AG04449 (cell line): ENCODE measurements at regions of chr5 and their contacts with region 1.

Region 1: DNA sequence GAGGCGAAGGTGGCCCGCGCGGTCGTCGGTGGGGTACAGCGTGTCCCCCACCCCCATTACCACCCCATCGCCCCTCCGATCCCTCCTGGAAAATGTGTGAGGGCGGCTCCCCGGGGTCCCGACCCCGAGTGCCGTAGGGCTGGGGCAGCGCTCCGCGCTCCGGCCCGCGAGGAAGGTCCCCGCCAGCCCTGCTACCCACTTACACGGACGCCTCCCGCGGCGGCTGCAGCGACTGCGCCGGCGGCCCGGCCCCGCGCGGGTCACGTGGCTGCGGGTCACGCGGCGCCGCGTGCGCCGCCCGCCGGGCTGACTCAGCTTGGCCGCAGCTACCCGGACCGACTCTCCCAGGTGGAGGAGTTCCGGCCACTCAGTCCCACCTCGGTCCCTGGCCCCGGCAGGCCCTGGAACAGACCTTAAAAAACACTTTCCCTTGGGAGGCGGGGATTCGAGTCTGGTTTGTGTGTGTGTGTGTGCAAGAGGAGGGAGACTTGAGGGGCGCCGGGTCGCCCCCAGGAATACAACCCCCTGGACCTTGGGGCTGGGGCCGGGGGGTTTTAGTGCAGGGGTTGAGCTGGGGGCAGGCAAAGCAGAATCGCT is at the start of gene GNPDA1:
- DNase-seq: no peak
- H3K4me3 ChIP-seq: peak within 1 kb of the TSS; percentile 77
- CTCF ChIP-seq: no peak

Region 2: DNA sequence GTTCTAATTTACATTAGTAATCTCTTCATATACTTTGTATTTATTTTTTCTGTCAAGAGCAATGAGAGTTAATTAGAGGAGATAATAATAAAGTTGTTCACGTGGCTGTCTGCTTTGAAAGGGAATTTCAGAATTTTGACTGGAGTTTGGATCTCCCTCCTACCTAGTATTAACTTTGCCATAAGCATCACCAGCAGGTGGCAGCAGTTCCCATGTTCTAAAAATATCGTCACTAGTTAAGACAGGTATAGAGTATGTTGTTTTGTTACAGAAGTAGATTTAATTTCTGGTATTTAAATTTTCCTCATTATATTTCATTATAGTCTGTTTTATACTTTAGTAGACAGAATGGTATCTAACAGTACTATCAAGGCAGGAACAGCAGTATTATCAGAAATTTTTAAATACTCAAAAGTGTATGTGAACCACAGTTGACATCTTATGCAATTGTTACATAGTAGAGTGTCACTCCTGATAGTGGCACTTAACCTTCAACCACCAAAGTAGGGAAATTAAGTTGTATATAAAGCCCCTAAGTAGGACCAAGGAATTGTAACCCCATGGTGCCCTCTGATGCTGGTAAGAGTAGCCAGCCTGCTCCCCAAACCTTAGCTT is 20.4 kb before region 1 on chr5:
- CTCF ChIA-PET with region 1: interaction called, 70 read pairs
- POLR2A ChIA-PET with region 1: no interaction called
- DNase-seq: no peak
- H3K4me3 ChIP-seq: no peak overlapping the region
- CTCF ChIP-seq: peak; percentile 67

Region 3: GRCh38 chr5:142000703-142001484 is 12.0 kb before region 1 on chr5:
- CTCF ChIA-PET with region 1: interaction called, 70 read pairs
- POLR2A ChIA-PET with region 1: no interaction called
- DNase-seq: no peak
- H3K4me3 ChIP-seq: no peak overlapping the region
- CTCF ChIP-seq: peak; percentile 9

Region 4: GRCh38 chr5:142024771-142025304 is 11.9 kb after region 1 on chr5:
- CTCF ChIA-PET with region 1: interaction called, 32 read pairs
- POLR2A ChIA-PET with region 1: interaction called, 5 read pairs
- DNase-seq: no peak
- H3K4me3 ChIP-seq: peak overlapping the region; percentile 59
- CTCF ChIP-seq: no peak

Region 5: DNA sequence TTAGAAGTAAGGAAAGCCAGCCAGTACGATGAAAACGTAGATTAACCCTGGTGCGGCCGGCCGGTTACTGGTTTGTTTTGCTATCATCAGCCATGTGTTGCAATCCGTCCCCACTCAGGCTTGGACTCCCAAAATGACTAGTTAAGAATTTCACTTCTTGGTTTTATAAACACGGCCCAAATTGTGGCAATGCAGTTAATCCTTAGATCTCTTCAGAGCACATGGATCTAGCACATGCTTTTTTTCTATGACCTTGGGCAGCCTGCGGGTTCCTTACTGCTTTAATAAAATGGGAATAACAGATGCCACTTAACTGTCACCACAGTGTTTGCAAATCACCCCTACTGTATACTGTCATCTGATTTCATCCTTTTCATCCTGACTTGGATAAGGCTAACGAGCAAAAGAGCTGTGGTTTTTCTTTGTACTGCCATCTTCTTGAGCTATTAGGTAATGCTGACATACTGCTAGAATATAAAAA is 97.2 kb after region 1 on chr5:
- CTCF ChIA-PET with region 1: interaction called, 14 read pairs
- POLR2A ChIA-PET with region 1: interaction called, 5 read pairs
- DNase-seq: no peak
- H3K4me3 ChIP-seq: peak overlapping the region; percentile 74
- CTCF ChIP-seq: no peak